Activated T-helper 2 cell treated with anti-CD3 and anti-CD28 coated beads, Interferon-gamma antibody, Interleukin-2, Interleukin-4, amounts not matched to agents 10 μg/mL and 5 μg/mL and 100 μg/mL, durations not matched to agents 14 hours and 24 hours and 36 hours (primary cell): ENCODE measurements at regions of chr20 and their contacts with region 1.

Region 1: GRCh38 chr20:58703264-58703663 is 10.7 kb downstream of the NPEPL1 start:
- DNase-seq: no peak
- H3K4me3 Mint-ChIP-seq: no peak overlapping the region
- H3K27ac Mint-ChIP-seq: no peak overlapping the region
- H3K4me1 Mint-ChIP-seq: peaks cover 12% of the 10 kb centered on the region
- H3K27me3 Mint-ChIP-seq: no peaks in the 10 kb centered on the region

Region 2: DNA sequence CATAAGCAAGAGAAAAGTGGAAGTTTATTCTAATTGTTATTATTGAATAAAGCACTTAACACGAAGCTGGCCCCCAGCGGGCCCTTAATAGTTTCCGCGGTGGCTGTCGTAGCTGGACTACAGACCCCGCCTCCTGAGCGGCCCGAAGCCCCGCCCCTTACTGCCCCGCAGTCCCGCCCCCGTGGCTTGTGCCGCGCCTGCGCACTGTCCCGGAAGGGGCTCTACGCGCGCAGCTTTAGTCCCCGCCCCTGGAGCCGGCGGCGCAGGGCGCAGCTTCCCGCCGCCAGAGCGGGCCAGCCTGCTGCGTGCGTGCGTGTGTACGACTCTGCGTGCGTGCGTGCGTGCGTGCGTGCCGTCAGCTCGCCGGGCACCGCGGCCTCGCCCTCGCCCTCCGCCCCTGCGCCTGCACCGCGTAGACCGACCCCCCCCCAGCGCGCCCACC is 314.4 kb before region 1 on chr20 and contains the start of gene VAPB:
- intact Hi-C with region 1: no loop called
- DNase-seq: peak; percentile 95
- H3K4me3 Mint-ChIP-seq: peak within 1 kb of the TSS; percentile 96
- H3K27ac Mint-ChIP-seq: peak within 1 kb of the TSS; percentile 97
- H3K4me1 Mint-ChIP-seq: peaks cover 35% of the 10 kb centered on the region
- H3K27me3 Mint-ChIP-seq: peaks cover 5% of the 10 kb centered on the region
- total RNA-seq, gene VAPB: 35.6 and 36.2 TPM in 2 replicates

Region 3: DNA sequence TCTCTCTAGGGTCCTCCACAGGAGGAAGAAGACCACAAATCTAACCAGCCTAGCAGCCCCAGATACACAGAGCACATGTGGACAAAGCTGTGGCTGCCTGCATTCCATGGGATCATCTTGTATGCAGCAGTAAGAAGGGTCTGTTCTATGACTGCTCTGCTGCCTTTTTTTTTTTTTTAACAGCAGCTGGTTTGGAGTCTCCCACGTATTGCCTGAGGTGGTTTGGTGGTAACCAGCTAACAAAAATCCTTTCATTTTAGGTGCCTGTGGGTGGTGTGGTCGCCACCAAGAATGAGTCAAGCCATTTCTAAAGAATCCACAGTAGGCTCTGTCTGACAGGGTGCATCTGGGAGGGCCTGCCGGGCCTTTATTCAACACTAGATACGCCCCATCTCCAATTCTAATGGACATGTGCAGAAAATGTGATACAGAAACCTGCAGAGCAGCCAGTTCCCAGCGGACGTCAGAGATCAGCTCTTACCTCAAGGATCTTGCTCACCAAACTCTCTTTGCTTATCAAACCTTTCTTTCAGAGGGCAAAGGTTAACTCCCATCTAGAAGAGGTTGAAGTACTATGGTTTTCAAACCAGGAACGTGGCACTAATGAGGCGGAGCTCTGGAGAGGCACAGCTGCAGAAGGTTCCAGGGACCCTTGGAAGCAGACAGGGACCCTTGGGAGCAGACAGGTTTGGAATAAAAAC is 115.5 kb after region 1 on chr20:
- intact Hi-C with region 1: loop called (anchors 10 kb)
- DNase-seq: peak; percentile 55
- H3K4me3 Mint-ChIP-seq: no peak overlapping the region
- H3K27ac Mint-ChIP-seq: peak overlapping the region; percentile 40
- H3K4me1 Mint-ChIP-seq: peaks cover 15% of the 10 kb centered on the region
- H3K27me3 Mint-ChIP-seq: peaks cover 23% of the 10 kb centered on the region